GM18951 (cell line): ENCODE measurements at regions of chr18 and their contacts with region 1.

Region 1: GRCh38 chr18:75161256-75162028 is 47.5 kb downstream of the PTGR3 start:
- POLR2A ChIP-seq: no peak

Region 2: GRCh38 chr18:75455249-75456198 is 294.1 kb after region 1 on chr18:
- in situ Hi-C with region 1: loop called (anchors 25 kb)
- POLR2A ChIP-seq: no peak